Aorta (tissue), 5 donors: ENCODE measurements at regions of chr11 and their contacts with region 1.

Region 1: GRCh38 chr11:8768625-8769333 is 86.2 kb downstream of the RPL27A start:
- DNase-seq: peak in 1 of 2 donors; percentile 62
- ATAC-seq: peak; percentile 71
- H3K4me3 ChIP-seq: no peak overlapping the region
- H3K27ac ChIP-seq: peak overlapping the region in 1 of 2 donors; percentile 84
- H3K4me1 ChIP-seq: peaks cover 2 to 9% of the 10 kb centered on the region in 2 donors
- H3K27me3 ChIP-seq: no peaks in the 10 kb centered on the region

Region 2: GRCh38 chr11:8688414-8689362 is 80.1 kb before region 1 on chr11:
- intact Hi-C with region 1: loop called (anchors 5 to 10 kb)
- DNase-seq: peak; percentile 97 to 98
- ATAC-seq: peak; percentile 97
- H3K4me3 ChIP-seq: peak overlapping the region; percentile 32 to 65
- H3K27ac ChIP-seq: peak overlapping the region; percentile 18 to 92
- H3K4me1 ChIP-seq: no peaks in the 10 kb centered on the region
- H3K27me3 ChIP-seq: no peaks in the 10 kb centered on the region

Region 3: GRCh38 chr11:8717876-8718753 is 50.7 kb before region 1 on chr11:
- intact Hi-C with region 1: loop called in 1 of 2 experiments (anchors 5 kb)
- DNase-seq: peak in 1 of 2 donors; percentile 77
- ATAC-seq: peak; percentile 66
- H3K4me3 ChIP-seq: no peak overlapping the region
- H3K27ac ChIP-seq: peak overlapping the region; percentile 91 to 100
- H3K4me1 ChIP-seq: peaks cover 8 to 10% of the 10 kb centered on the region in 2 donors
- H3K27me3 ChIP-seq: no peaks in the 10 kb centered on the region

Region 4: GRCh38 chr11:8732748-8733241 is 36.0 kb before region 1 on chr11:
- intact Hi-C with region 1: loop called in 1 of 2 experiments (anchors 5 kb)
- DNase-seq: peak; percentile 92 to 93
- ATAC-seq: peak; percentile 92
- H3K4me3 ChIP-seq: no peak overlapping the region
- H3K27ac ChIP-seq: peak overlapping the region in 1 of 2 donors; percentile 60
- H3K4me1 ChIP-seq: peaks cover 1 to 6% of the 10 kb centered on the region in 2 donors
- H3K27me3 ChIP-seq: no peaks in the 10 kb centered on the region

Region 5: DNA sequence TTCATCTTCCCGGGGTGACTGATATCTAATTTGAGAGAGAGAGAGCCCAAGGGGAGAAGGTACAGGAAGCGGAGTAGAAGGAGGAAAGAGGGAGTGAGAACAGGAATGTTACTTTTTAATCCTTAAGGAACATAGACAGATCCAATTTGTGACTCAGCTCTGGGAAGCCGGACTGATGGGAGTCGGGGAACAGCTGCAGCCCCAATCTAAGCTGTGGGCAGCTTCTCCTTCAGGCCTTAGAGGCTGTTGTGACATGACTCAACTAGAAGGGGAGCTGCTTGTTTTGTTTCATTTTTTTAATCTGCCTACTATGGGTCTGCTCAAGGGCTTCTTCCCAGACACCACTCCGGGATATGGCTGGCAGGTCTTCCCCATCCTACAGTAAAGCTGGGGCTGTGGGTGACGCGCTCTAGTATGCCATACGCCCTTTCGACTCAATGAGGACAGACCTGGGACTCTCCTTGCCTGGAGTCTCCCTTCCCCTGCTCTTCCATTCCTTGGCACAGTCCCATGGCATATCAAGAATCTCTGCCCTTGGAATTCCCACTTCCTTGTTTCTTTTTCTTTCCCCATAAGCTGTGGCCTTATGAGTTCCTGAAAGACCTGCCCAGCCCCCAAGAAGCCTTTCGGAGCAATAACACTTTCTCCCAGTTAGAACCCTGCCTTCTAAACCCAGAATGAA is 38.9 kb after region 1 on chr11:
- intact Hi-C with region 1: loop called (anchors 2 to 5 kb)
- DNase-seq: no peak
- ATAC-seq: peak; percentile 65
- H3K4me3 ChIP-seq: peak overlapping the region in 1 of 2 donors; percentile 3
- H3K27ac ChIP-seq: peak overlapping the region; percentile 53 to 93
- H3K4me1 ChIP-seq: peaks cover 0 to 2% of the 10 kb centered on the region in 2 donors
- H3K27me3 ChIP-seq: no peaks in the 10 kb centered on the region